Activated CD8-positive, alpha-beta memory T cell treated with anti-CD3 and anti-CD28 coated beads, Interleukin-2, amount 10 ng/mL, durations not matched to agents 7 days and 5 days (primary cell): ENCODE measurements at regions of chr9 and their contacts with region 1.

Region 1: GRCh38 chr9:112898872-112899311 is 8.2 kb upstream of the SLC46A2 start:
- DNase-seq: no peak
- ATAC-seq: no peak
- H3K4me3 Mint-ChIP-seq: no peak overlapping the region
- H3K27ac Mint-ChIP-seq: no peak overlapping the region
- H3K4me1 Mint-ChIP-seq: peaks cover 19% of the 10 kb centered on the region
- H3K27me3 Mint-ChIP-seq: peaks cover 49% of the 10 kb centered on the region

Region 2: GRCh38 chr9:112844771-112845542 is 53.9 kb before region 1 on chr9:
- CTCF ChIA-PET with region 1: interaction called, 28 read pairs
- DNase-seq: peak; percentile 80
- ATAC-seq: peak; percentile 75
- H3K4me3 Mint-ChIP-seq: no peak overlapping the region
- H3K27ac Mint-ChIP-seq: no peak overlapping the region
- H3K4me1 Mint-ChIP-seq: peaks cover 13% of the 10 kb centered on the region
- H3K27me3 Mint-ChIP-seq: no peaks in the 10 kb centered on the region

Region 3: DNA sequence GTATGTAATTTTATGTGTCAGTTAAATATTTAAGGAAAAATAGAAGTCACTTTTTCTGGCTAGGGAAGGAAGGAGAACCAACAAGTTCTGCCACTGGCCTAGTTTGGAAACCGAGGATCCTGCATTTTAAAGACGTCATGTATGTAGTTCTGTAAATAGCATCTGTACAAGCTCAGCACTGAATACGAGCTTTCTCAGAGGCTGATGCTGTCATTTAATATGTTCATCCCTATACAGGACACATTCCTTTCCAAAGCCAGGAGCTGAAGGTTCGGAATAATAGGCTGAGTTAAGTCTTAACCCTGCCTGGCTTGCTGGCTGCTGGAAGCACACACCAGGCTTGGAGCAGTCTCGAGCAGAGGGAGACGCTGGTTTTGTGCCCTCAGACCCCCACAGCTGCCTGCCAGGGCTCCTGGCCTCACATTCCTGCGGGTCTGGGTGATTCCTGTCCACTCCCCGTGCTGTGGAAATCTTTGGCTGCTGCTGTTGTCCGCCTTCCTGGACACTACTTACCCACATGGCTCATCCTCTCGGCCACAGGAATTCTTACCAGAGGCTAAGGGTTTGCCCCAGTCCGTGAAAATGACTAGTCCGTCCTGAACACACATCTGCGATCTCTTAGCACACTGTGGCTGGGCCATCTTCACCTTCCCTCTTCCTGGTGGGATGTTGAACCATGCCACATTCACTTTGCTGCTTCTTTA is 44.9 kb before region 1 on chr9:
- CTCF ChIA-PET with region 1: interaction called, 13 read pairs
- DNase-seq: no peak
- ATAC-seq: no peak
- H3K4me3 Mint-ChIP-seq: no peak overlapping the region
- H3K27ac Mint-ChIP-seq: no peak overlapping the region
- H3K4me1 Mint-ChIP-seq: no peaks in the 10 kb centered on the region
- H3K27me3 Mint-ChIP-seq: no peaks in the 10 kb centered on the region

Region 4: GRCh38 chr9:113026200-113026599 is 127.3 kb after region 1 on chr9:
- CTCF ChIA-PET with region 1: no interaction called
- DNase-seq: no peak
- ATAC-seq: no peak
- H3K4me3 Mint-ChIP-seq: no peak overlapping the region
- H3K27ac Mint-ChIP-seq: no peak overlapping the region
- H3K4me1 Mint-ChIP-seq: no peaks in the 10 kb centered on the region
- H3K27me3 Mint-ChIP-seq: no peaks in the 10 kb centered on the region

Region 5: DNA sequence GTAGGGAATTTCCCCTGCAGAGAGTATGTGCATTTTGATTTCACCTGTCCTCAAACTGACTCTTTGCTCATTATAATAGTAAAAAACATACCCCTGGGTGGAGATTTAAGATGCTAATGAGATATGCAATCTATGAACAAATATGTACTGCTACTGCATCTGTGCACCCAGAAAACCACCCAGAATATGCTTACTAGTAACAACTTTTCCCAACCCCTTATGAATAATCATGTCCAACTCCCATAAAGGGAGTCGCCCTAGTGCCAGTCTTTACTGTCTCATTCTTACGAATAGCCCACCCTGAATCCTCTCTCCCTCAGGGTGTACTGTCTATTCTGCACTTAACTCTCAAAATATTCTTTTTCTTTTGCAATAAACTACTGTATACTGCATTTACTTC is 196.7 kb after region 1 on chr9:
- CTCF ChIA-PET with region 1: no interaction called
- DNase-seq: no peak
- ATAC-seq: no peak
- H3K4me3 Mint-ChIP-seq: no peak overlapping the region
- H3K27ac Mint-ChIP-seq: no peak overlapping the region
- H3K4me1 Mint-ChIP-seq: no peaks in the 10 kb centered on the region
- H3K27me3 Mint-ChIP-seq: peaks cover 32% of the 10 kb centered on the region